Activated naive CD4-positive, alpha-beta T cell treated with anti-CD3 and anti-CD28 coated beads for 36 hours (primary cell): ENCODE measurements at regions of chr11 and their contacts with region 1.

Region 1: GRCh38 chr11:33039274-33040032 is at the start of gene TCP11L1:
- DNase-seq: peak; percentile 88
- H3K4me3 Mint-ChIP-seq: peak within 1 kb of the TSS; percentile 85
- H3K27ac Mint-ChIP-seq: peak within 1 kb of the TSS; percentile 92
- H3K4me1 Mint-ChIP-seq: peaks cover 25% of the 10 kb centered on the region
- H3K27me3 Mint-ChIP-seq: no peaks in the 10 kb centered on the region
- total RNA-seq, gene TCP11L1: 4.8 to 5.7 TPM

Region 2: GRCh38 chr11:32821517-32821916 is 217.9 kb before region 1 on chr11:
- CTCF ChIA-PET with region 1: no interaction called
- intact Hi-C with region 1: loop called (anchors 1 kb)
- DNase-seq: peak; percentile 10
- H3K4me3 Mint-ChIP-seq: no peak overlapping the region
- H3K27ac Mint-ChIP-seq: peak overlapping the region; percentile 4
- H3K4me1 Mint-ChIP-seq: peaks cover 25% of the 10 kb centered on the region
- H3K27me3 Mint-ChIP-seq: no peaks in the 10 kb centered on the region

Region 3: GRCh38 chr11:32829680-32830412 is 209.6 kb before region 1 on chr11 and contains the start of gene PRRG4:
- CTCF ChIA-PET with region 1: no interaction called
- intact Hi-C with region 1: loop called (anchors 2 kb)
- DNase-seq: peak; percentile 66
- H3K4me3 Mint-ChIP-seq: peak within 1 kb of the TSS; percentile 87
- H3K27ac Mint-ChIP-seq: no peak within 1 kb of the TSS
- H3K4me1 Mint-ChIP-seq: peaks cover 6% of the 10 kb centered on the region
- H3K27me3 Mint-ChIP-seq: peaks cover 35% of the 10 kb centered on the region
- total RNA-seq, gene PRRG4: 0.15 to 0.19 TPM

Region 4: GRCh38 chr11:33329705-33330329 is 290.4 kb after region 1 on chr11:
- CTCF ChIA-PET with region 1: no interaction called
- intact Hi-C with region 1: no loop called
- DNase-seq: peak; percentile 66
- H3K4me3 Mint-ChIP-seq: no peak overlapping the region
- H3K27ac Mint-ChIP-seq: no peak overlapping the region
- H3K4me1 Mint-ChIP-seq: peaks cover 13% of the 10 kb centered on the region
- H3K27me3 Mint-ChIP-seq: no peaks in the 10 kb centered on the region

Region 5: GRCh38 chr11:33773987-33774735 is 734.7 kb after region 1 on chr11 and contains the start of gene FBXO3:
- CTCF ChIA-PET with region 1: no interaction called
- intact Hi-C with region 1: loop called (anchors 2 kb)
- DNase-seq: peak; percentile 82
- H3K4me3 Mint-ChIP-seq: peak within 1 kb of the TSS; percentile 90
- H3K27ac Mint-ChIP-seq: peak within 1 kb of the TSS; percentile 85
- H3K4me1 Mint-ChIP-seq: peaks cover 40% of the 10 kb centered on the region
- H3K27me3 Mint-ChIP-seq: peaks cover 12% of the 10 kb centered on the region
- total RNA-seq, gene FBXO3: 12.2 to 12.9 TPM